Mucosa of descending colon (tissue), 3 donors: ENCODE measurements at regions of chr6 and their contacts with region 1.

Region 1: DNA sequence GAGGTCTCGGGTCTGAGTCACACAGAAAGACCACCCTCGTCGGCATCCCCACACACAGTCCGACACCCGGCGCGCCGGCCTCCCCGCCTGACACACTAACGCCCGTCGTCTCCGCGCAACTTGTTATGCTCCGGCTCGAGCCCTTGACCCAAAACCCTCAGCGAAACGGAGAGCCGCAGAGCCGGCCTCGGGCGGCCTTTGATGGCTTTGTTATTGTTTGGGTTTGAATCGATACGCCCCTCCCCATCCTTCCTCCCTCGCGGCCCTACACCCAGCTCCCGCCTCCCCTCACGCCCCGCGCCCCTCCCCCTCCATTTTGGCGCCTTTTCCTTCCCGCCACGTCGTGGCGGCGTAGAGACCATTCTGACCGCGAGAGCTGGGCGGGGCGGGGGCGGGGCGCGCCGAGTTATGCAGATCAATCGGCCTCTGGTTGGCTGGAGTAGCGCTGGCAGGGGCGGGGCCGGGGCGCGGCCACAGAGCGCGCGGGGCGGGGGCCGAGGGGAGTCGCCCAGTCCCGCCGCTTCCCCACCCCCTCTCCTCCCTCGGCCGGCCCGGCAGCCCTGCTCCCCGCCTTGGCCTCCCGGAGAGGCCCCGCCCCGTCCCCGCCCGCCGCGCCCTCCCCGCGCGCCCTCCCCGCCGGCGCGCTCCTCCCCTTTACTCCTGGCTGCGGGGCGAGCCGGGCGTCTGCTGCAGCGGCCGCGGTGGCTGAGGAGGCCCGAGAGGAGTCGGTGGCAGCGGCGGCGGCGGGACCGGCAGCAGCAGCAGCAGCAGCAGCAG is at the start of gene PIM1:
- DNase-seq: peak; percentile 100
- ATAC-seq: peak; percentile 89
- H3K4me3 ChIP-seq: peak within 1 kb of the TSS; percentile 52
- H3K4me1 ChIP-seq: peaks cover 12% of the 10 kb centered on the region
- CTCF ChIP-seq: no peak
- total RNA-seq, gene PIM1: 36.9 to 84.1 (median 56.0) TPM

Region 2: GRCh38 chr6:37051138-37052026 is 118.3 kb before region 1 on chr6:
- intact Hi-C with region 1: loop called (anchors 1 to 5 kb)
- DNase-seq: peak; percentile 94 to 96 (median 96)
- ATAC-seq: peak; percentile 87
- H3K4me3 ChIP-seq: no peak overlapping the region
- H3K4me1 ChIP-seq: peaks cover 14% of the 10 kb centered on the region
- CTCF ChIP-seq: peak; percentile 74

Region 3: DNA sequence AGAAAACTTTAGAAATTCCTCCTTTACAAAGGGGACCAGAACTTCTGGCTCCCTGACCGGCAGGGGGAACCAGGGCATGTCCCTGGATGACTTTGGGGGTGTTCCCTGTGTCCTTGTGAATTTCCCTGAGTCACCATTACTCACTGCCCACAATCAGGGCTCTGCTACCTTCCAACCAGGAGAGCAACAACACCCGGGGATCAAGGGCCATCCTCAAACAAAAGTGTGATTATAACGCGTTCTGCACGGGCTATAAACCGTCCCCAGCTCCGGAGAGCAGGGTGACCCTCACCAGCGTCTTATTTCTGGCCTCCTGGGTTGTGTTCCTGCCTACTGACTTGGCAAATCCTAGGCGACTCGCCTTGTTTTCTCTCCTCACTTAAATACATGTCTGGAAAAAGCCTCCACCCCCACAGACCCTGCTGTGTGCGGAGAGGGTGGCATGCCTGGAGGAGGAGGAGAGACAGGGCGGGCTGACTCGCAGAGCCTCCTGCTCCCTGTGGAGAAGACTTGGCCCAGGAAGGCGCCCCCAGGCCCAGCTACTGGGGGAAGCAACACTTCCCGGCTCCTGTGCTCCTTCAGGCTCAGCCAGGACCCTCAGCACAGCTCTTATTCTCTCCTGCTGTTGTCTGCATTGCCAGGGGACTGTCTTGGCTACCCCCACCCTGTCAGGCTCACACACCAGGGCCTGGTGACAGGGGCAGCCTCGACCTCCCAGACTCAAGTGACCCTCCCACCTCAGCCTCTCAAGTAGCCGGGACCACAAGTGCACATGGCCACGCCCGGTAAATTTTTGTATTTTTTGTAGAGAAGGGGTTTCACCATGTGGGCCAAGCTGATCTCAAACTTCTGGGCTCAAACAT is 110.1 kb before region 1 on chr6:
- intact Hi-C with region 1: loop called in 1 of 2 experiments (anchors 5 kb)
- DNase-seq: peak; percentile 64 to 71 (median 68)
- ATAC-seq: peak; percentile 90
- H3K4me3 ChIP-seq: no peak overlapping the region
- H3K4me1 ChIP-seq: peaks cover 4% of the 10 kb centered on the region
- CTCF ChIP-seq: no peak

Region 4: GRCh38 chr6:37134606-37135191 is 35.0 kb before region 1 on chr6:
- intact Hi-C with region 1: loop called in 1 of 2 experiments (anchors 5 kb)
- DNase-seq: peak in 2 of 3 donors; percentile 51 to 66
- ATAC-seq: peak; percentile 88
- H3K4me3 ChIP-seq: no peak overlapping the region
- H3K4me1 ChIP-seq: peaks cover 31% of the 10 kb centered on the region
- CTCF ChIP-seq: no peak